ENCODE measurements at regions of chr1 and their contacts with region 1.

Region 1: DNA sequence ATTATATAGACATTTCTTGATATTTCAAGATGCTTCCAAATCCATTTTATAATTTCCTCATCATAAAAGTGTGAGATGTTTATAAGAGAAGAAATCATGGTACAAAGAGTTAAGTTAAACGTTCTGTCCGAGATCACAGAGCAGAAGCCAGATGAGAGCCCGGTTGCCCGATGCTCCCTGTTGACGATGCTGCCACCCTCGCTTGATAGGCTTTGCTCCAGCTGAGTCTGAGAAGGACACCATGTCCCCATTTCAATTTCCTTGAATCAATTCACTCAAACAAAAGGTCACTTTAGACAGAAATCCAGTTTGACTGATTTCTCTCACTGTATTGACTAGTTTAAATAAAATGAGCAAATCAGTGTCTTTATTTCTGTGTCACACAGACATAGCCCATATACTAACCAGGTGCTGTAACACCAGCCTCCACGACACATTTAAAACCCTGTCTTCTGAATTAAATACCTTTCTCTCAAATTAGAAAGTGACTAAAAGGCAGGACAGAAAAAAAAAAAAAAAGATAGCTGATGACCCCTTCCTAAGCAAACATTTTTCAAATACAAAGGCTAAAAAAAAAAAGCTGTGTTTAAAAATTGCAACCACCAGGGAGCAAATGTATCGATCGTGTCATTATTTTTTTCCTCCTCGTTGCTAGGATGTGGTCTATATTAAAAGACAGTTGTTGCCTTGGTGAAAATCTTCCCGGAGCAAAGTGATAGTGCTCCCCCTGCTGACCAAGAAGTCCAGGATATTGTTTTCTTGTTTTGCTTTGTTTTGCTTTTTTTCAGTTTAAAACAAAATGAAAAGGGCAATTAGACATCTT is 35.2 kb downstream of the DNASE2B start:
- DNase-seq: peak; percentile 59
- H3K4me3 ChIP-seq: peak overlapping the region; percentile 39
- H3K27ac ChIP-seq: peak overlapping the region; percentile 37 to 65; a peak in 2 of 4 replicates
- H3K4me1 ChIP-seq: peaks cover 4 to 9% of the 10 kb centered on the region in 2 experiments; a peak in 3 of 4 replicates
- H3K27me3 ChIP-seq: no peaks in the 10 kb centered on the region
- CTCF ChIP-seq: peak; percentile 93
- EP300 ChIP-seq: no peak
- RAD21 ChIP-seq: peak; percentile 94

Region 2: GRCh38 chr1:84141177-84142003 is 292.1 kb before region 1 on chr1:
- CTCF ChIA-PET with region 1: interaction called, 17 read pairs
- POLR2A ChIA-PET with region 1: no interaction called
- DNase-seq: no peak
- H3K4me3 ChIP-seq: no peak overlapping the region
- H3K27ac ChIP-seq: no peak overlapping the region
- H3K4me1 ChIP-seq: peaks cover 0 to 21% of the 10 kb centered on the region in 2 experiments; a peak in 2 of 4 replicates
- H3K27me3 ChIP-seq: no peaks in the 10 kb centered on the region
- CTCF ChIP-seq: peak; percentile 76
- EP300 ChIP-seq: no peak
- RAD21 ChIP-seq: peak; percentile 64

Region 3: DNA sequence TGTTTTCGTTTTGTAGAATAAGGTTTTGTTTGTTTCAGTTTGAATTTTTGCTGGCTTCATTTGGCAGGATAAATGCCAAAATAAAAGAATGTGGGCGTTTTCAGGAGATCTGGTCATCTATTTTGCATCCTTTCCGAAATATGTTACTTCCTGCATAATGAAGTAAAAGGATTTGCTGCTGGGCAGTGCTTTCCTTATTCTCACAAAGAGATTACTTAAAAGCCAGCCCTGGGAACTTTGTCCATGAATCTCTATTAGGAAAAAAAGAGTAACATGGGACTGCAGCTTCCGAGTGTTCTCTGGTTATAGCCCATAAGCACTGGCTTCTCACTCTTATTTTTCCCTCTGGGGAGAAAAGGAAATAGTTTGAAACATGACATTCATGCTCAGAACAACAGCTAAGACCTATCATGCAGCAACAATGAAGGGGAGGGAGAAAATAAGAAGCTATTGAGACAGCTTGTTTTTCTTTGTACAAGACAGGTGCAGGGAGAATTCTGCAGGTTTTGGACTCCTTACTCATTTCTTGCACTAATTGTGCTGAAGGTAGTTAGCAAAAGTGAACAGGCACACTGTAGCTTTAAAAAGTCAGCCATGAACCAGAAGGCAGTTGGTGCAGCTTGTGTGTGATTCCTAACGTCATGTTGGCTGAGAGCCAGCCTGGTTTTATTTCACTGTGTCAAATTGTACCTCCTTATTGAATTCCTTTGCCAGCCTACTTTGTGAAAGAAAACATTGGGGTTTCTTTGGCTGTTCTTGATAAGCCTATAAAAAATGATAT is 132.3 kb before region 1 on chr1 and contains the start of gene SAMD13:
- CTCF ChIA-PET with region 1: interaction called, 14 read pairs
- POLR2A ChIA-PET with region 1: no interaction called
- DNase-seq: peak; percentile 51
- H3K4me3 ChIP-seq: peak within 1 kb of the TSS; percentile 47 to 51
- H3K27ac ChIP-seq: peak within 1 kb of the TSS; percentile 67 to 94
- H3K4me1 ChIP-seq: peaks cover 17 to 18% of the 10 kb centered on the region in 2 experiments; a peak in 3 of 4 replicates
- H3K27me3 ChIP-seq: no peaks in the 10 kb centered on the region
- CTCF ChIP-seq: no peak
- EP300 ChIP-seq: 0 out of 4 replicates have a peak, but pooled peaks of 1 of the 2 experiments have one; percentile 5
- RAD21 ChIP-seq: no peak
- polyA plus RNA-seq, gene SAMD13: 1.3 and 1.9 TPM in 2 replicates

Region 4: GRCh38 chr1:84422909-84423308 is 10.6 kb before region 1 on chr1:
- CTCF ChIA-PET with region 1: interaction called, 13 read pairs
- POLR2A ChIA-PET with region 1: no interaction called
- DNase-seq: no peak
- H3K4me3 ChIP-seq: no peak overlapping the region
- H3K27ac ChIP-seq: no peak overlapping the region
- H3K4me1 ChIP-seq: peaks cover 0 to 3% of the 10 kb centered on the region in 2 experiments; a peak in 2 of 4 replicates
- H3K27me3 ChIP-seq: no peaks in the 10 kb centered on the region
- CTCF ChIP-seq: no peak
- EP300 ChIP-seq: no peak
- RAD21 ChIP-seq: no peak